Ascending aorta (tissue), 2 donors: ENCODE measurements at regions of chr3 and their contacts with region 1.

Region 1: GRCh38 chr3:112582244-112582874 is 20.5 kb downstream of the SLC35A5 start:
- DNase-seq: no peak
- H3K4me3 ChIP-seq: no peak overlapping the region
- H3K27ac ChIP-seq: no peak overlapping the region
- H3K4me1 ChIP-seq: no peaks in the 10 kb centered on the region
- H3K27me3 ChIP-seq: no peaks in the 10 kb centered on the region
- CTCF ChIP-seq: peak in 2 of 3 experiments; percentile 42 to 58

Region 2: GRCh38 chr3:110925798-110926197 is 1656.6 kb before region 1 on chr3:
- intact Hi-C with region 1: no loop called
- DNase-seq: no peak
- H3K4me3 ChIP-seq: no peak overlapping the region
- H3K27ac ChIP-seq: no peak overlapping the region
- H3K4me1 ChIP-seq: no peaks in the 10 kb centered on the region
- H3K27me3 ChIP-seq: no peaks in the 10 kb centered on the region
- CTCF ChIP-seq: no peak

Region 3: DNA sequence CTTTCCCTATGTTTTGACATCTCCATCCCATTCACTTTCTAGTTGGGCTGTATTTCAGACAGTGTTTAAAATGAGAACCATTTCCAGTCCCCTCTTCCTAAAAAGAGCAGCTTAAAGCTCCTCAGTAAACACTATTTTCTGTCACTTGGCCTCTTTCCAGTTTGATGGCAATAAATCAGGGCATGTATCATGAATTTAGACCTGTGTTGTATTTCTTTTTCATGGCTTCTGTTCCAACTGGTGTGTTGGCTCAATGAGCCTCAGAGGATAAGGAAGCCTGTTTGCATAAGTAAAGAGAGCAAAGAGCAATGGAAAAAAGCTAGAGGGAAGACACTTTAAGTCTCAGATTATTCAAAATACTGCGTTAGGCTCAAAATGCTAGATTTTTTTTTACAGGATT is 51.4 kb after region 1 on chr3:
- intact Hi-C with region 1: no loop called
- DNase-seq: no peak
- H3K4me3 ChIP-seq: no peak overlapping the region
- H3K27ac ChIP-seq: peak overlapping the region in 1 of 2 donors; percentile 35
- H3K4me1 ChIP-seq: peaks cover 0 to 31% of the 10 kb centered on the region in 2 donors
- H3K27me3 ChIP-seq: no peaks in the 10 kb centered on the region
- CTCF ChIP-seq: no peak

Region 4: GRCh38 chr3:112814266-112814665 is 231.9 kb after region 1 on chr3:
- intact Hi-C with region 1: loop called (anchors 5 kb)
- DNase-seq: no peak
- H3K4me3 ChIP-seq: no peak overlapping the region
- H3K27ac ChIP-seq: no peak overlapping the region
- H3K4me1 ChIP-seq: peaks cover 0 to 8% of the 10 kb centered on the region in 2 donors
- H3K27me3 ChIP-seq: no peaks in the 10 kb centered on the region
- CTCF ChIP-seq: peak in 2 of 3 experiments; percentile 15 to 46

Region 5: DNA sequence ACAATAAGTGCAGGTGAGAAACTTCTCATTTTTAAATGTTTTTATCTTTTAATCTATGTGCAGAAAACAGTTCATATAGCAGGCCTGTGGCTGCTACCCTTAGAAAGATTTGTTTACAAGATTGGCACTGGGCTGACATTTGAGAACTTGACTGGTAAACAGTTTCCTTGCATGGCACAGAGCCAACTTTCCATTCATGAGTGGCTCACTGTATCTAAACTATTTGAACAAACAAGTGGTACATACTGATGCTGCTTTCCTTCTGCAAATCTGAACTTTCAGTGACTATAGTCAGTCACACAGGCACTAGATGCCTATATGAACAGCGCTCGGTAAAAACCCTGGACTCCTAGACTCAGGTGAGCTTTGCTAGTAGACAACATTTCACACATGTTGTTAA is 402.1 kb after region 1 on chr3:
- intact Hi-C with region 1: loop called (anchors 5 kb)
- DNase-seq: no peak
- H3K4me3 ChIP-seq: no peak overlapping the region
- H3K27ac ChIP-seq: no peak overlapping the region
- H3K4me1 ChIP-seq: no peaks in the 10 kb centered on the region
- H3K27me3 ChIP-seq: no peaks in the 10 kb centered on the region
- CTCF ChIP-seq: no peak